ENCODE measurements at regions of chr3 and their contacts with region 1.

Region 1: DNA sequence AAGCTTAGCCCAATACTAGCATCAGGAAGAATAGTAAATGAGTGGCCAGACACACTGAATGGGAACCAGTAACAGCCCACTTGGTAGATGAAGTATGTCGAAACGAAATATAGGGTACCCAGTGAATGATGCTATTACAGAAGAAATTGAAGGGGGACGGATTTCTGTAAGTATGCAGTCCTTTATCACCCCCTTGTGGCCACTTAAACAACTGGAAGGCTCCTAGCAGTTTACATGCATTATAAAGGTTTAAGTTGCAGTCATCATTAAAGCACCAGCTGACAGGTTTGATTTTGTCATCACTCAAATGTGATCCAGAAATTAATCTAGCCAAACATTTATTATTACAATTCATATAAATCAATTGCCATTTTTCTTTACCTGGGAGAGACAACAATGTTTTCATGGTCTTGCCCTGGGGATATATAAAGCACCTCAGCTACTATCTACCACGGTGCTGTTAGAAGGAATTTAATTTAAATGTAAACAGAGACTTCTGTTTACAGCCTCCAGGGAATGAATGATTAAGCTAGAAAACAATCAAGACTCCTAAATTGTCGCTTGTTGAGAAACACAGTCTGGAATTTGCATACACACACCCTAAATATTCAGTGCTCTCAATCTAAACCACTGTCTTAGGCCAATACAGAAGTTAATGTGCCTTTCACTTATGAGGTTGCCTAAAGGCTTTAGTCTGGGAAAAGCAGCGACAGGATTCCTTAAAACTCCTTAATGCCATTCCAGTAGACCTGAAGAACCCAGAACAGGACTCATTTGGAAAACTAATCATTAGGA is 7.8 kb downstream of the EIF1B start:
- DNase-seq: no peak
- ATAC-seq: peak; percentile 83
- H3K4me3 Mint-ChIP-seq: no peak overlapping the region
- H3K27ac Mint-ChIP-seq: peak overlapping the region; percentile 35
- H3K4me1 Mint-ChIP-seq: peaks cover 6% of the 10 kb centered on the region
- H3K27me3 Mint-ChIP-seq: no peaks in the 10 kb centered on the region
- CTCF ChIP-seq: peak; percentile 36

Region 2: DNA sequence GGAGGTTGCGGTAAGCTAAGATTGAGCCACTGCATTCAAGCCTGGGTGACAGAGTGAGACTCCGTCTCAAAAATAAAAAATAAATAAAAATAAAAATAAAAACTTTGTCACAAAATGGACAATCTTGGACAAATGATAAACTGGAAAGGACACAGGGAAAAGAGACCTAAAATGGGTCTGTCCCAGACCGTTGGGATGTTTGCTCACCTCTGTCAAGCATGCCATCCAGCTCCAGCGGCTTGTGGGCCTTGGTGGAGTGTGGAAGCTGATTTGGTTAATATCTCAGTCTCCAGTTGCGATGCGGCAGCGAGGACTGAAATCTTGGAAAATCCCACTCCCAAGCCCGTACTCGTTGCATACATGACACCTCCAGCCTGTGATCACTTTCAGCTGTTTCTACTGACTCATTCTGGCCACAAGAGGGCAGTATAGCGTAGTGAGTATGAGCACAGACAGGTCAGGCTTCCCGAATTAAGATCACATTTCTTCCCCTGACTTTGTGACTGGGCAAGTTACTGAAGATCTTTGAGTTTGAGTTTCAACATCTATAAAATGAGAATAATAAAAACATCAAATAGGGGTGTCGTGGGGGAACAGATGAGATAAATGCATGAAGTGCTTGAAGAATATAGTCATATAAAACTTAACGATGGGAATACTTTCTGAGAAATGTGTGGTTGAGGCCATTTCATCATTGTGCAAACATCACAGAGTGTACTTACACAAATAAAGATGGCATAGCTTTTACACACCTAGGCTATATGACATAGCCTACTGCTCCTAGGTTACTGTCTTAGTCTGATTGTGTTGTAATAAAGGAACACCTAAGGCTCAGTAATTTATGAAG is 869.4 kb before region 1 on chr3:
- CTCF ChIA-PET with region 1: interaction called, 5 read pairs
- POLR2A ChIA-PET with region 1: no interaction called
- intact Hi-C with region 1: loop called (anchors 1 kb)
- DNase-seq: no peak
- ATAC-seq: peak; percentile 57
- H3K4me3 Mint-ChIP-seq: no peak overlapping the region
- H3K27ac Mint-ChIP-seq: no peak overlapping the region
- H3K4me1 Mint-ChIP-seq: no peaks in the 10 kb centered on the region
- H3K27me3 Mint-ChIP-seq: peaks cover 6% of the 10 kb centered on the region
- CTCF ChIP-seq: peak; percentile 71

Region 3: GRCh38 chr3:39668420-39668819 is 648.8 kb before region 1 on chr3:
- CTCF ChIA-PET with region 1: no interaction called
- POLR2A ChIA-PET with region 1: no interaction called
- intact Hi-C with region 1: loop called (anchors 1 kb)
- DNase-seq: no peak
- ATAC-seq: peak; percentile 37
- H3K4me3 Mint-ChIP-seq: no peak overlapping the region
- H3K27ac Mint-ChIP-seq: no peak overlapping the region
- H3K4me1 Mint-ChIP-seq: no peaks in the 10 kb centered on the region
- H3K27me3 Mint-ChIP-seq: peaks cover 3% of the 10 kb centered on the region
- CTCF ChIP-seq: no peak

Region 4: GRCh38 chr3:40191850-40192448 is 125.3 kb before region 1 on chr3:
- CTCF ChIA-PET with region 1: interaction called, 84 read pairs
- POLR2A ChIA-PET with region 1: interaction called, 10 read pairs
- intact Hi-C with region 1: loop called (anchors 1 kb)
- DNase-seq: peak; percentile 26
- ATAC-seq: peak; percentile 82
- H3K4me3 Mint-ChIP-seq: no peak overlapping the region
- H3K27ac Mint-ChIP-seq: no peak overlapping the region
- H3K4me1 Mint-ChIP-seq: no peaks in the 10 kb centered on the region
- H3K27me3 Mint-ChIP-seq: no peaks in the 10 kb centered on the region
- CTCF ChIP-seq: peak; percentile 60

Region 5: DNA sequence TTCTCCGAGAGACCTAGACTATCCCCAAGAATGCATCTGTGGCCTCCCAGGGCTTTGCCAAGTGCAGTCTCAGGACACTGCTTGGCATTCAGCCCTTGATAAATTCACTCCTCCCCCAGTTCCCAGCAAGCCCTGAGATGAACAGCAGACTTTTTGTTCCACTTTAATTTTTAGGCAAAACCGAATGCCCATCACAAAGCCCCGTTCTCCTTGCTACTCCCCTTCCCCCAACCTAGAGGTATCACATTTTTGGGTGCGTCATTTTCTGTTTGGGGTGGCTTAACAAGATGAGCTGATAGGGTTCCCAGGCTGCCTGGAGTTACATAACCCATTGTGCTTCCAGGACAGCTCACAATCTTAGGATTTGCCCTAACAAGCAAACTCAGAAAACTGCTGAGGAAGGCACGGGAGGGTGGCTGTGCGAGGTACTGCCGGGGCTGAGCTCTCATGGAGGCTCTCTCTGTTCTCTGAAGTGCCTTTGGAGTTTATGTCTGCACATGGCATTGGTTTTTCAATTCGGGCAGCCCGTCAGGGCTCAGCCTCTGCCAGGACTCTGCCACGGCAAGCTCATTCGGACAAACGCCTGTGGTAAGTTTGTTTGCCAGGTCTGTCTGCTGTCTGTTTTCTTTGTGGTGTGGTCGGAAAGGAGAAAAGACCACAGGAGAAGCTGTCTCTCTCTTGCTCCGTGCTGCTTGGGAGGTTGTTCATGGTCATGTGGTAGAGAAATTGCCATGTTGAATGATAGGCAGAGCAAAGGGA is 1773.9 kb after region 1 on chr3 and contains the start of gene TRAK1:
- CTCF ChIA-PET with region 1: no interaction called
- POLR2A ChIA-PET with region 1: no interaction called
- intact Hi-C with region 1: loop called (anchors 10 kb)
- DNase-seq: no peak
- ATAC-seq: no peak
- H3K4me3 Mint-ChIP-seq: peak within 1 kb of the TSS; percentile 29
- H3K27ac Mint-ChIP-seq: peak within 1 kb of the TSS; percentile 86
- H3K4me1 Mint-ChIP-seq: peaks cover 82% of the 10 kb centered on the region
- H3K27me3 Mint-ChIP-seq: no peaks in the 10 kb centered on the region
- CTCF ChIP-seq: no peak
- total RNA-seq, gene TRAK1: 54.5 and 58.4 TPM in 2 replicates